H1 (cell line): ENCODE measurements at regions of chr2 and their contacts with region 1.

Region 1: DNA sequence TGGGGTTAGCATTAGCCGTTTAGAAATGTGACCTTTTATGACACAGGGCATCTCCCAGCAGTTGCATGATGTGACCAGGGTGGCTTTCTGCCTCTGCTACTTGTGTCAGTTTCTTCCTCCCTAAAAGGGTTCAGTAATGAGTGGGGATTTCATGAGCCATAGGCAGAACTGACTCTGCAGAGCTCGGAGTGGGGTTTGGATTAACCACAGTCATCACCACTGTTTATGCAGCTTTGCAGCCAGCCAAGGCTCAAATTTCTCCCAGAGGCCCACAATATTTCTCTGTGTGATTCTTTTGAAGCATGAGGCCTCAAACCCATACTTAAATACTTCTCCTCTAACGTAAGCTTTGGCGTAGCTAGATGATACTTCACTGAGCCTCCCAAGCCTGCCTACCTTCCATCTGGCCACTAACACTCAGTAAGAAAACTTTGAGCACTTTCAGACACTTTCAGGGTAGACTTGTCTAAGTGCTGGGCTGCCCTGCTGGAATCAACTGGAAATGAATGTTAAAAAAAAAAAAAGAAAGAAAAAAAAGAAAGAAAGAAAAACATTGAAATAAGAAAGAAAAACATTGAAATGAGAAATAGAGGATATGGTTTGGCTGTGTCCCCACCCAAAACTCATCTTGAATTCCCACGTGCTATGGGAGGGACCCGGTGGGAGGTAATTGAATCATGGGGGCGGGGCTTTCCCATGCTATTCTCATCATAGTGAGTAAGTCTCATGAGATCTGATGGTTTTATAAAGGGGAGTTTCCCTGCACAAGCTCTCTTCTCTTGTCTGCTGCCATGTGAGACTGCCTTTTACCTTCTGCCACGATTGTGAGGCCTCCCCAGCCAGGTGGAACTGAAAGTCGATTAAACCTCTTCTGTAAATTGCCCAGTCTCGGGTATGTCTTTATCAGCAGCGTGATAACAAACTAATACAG is 11.5 kb upstream of the LAPTM4A start:
- DNase-seq: no peak
- H3K4me3 ChIP-seq: no peak overlapping the region
- H3K27ac ChIP-seq: no peak overlapping the region
- H3K4me1 ChIP-seq: no peaks in the 10 kb centered on the region
- H3K27me3 ChIP-seq: no peaks in the 10 kb centered on the region
- CTCF ChIP-seq: no peak
- EP300 ChIP-seq: no peak
- POLR2A ChIP-seq: no peak
- RAD21 ChIP-seq: no peak

Region 2: GRCh38 chr2:20051532-20052228 is 11.2 kb before region 1 on chr2 and contains the start of gene LAPTM4A:
- CTCF ChIA-PET with region 1: interaction called, 3 read pairs
- POLR2A ChIA-PET with region 1: interaction called, 12 read pairs
- DNase-seq: peak; percentile 96 to 99
- H3K4me3 ChIP-seq: peak within 1 kb of the TSS; percentile 85 to 88 (median 86)
- H3K27ac ChIP-seq: peak within 1 kb of the TSS; percentile 94
- H3K4me1 ChIP-seq: peaks cover 0 to 5% (median 0%) of the 10 kb centered on the region in 4 experiments; a peak in 3 of 7 replicates
- H3K27me3 ChIP-seq: no peaks in the 10 kb centered on the region
- CTCF ChIP-seq: no peak
- EP300 ChIP-seq: no peak
- POLR2A ChIP-seq: peak; percentile 78 to 79
- RAD21 ChIP-seq: peak; percentile 1 to 3; a peak in 1 of 4 replicates
- total RNA-seq, gene LAPTM4A: 187 and 193 TPM in 2 replicates